ENCODE measurements at regions of chr4 and their contacts with region 1.

Region 1: GRCh38 chr4:174528226-174528625 is 5.9 kb upstream of the HPGD start:
- DNase-seq: no peak
- ATAC-seq: no peak
- H3K4me3 ChIP-seq: no peak overlapping the region
- H3K4me3 Mint-ChIP-seq: no peak overlapping the region
- H3K27ac ChIP-seq: no peak overlapping the region
- H3K27ac Mint-ChIP-seq: no peak overlapping the region
- H3K4me1 ChIP-seq: peaks cover under 1% of the 10 kb centered on the region
- H3K4me1 Mint-ChIP-seq: peaks cover 7% of the 10 kb centered on the region
- H3K27me3 ChIP-seq: peaks cover 4% of the 10 kb centered on the region in 2 experiments
- H3K27me3 Mint-ChIP-seq: peaks cover 33% of the 10 kb centered on the region
- CTCF ChIP-seq: no peak

Region 2: GRCh38 chr4:173782660-173783059 is 745.6 kb before region 1 on chr4:
- CTCF ChIA-PET with region 1: no interaction called
- POLR2A ChIA-PET with region 1: no interaction called
- intact Hi-C with region 1: no loop called
- DNase-seq: no peak
- ATAC-seq: no peak
- H3K4me3 ChIP-seq: no peak overlapping the region
- H3K4me3 Mint-ChIP-seq: no peak overlapping the region
- H3K27ac ChIP-seq: no peak overlapping the region
- H3K27ac Mint-ChIP-seq: no peak overlapping the region
- H3K4me1 ChIP-seq: no peaks in the 10 kb centered on the region
- H3K4me1 Mint-ChIP-seq: no peaks in the 10 kb centered on the region
- H3K27me3 ChIP-seq: no peaks in the 10 kb centered on the region
- H3K27me3 Mint-ChIP-seq: no peaks in the 10 kb centered on the region
- CTCF ChIP-seq: no peak

Region 3: DNA sequence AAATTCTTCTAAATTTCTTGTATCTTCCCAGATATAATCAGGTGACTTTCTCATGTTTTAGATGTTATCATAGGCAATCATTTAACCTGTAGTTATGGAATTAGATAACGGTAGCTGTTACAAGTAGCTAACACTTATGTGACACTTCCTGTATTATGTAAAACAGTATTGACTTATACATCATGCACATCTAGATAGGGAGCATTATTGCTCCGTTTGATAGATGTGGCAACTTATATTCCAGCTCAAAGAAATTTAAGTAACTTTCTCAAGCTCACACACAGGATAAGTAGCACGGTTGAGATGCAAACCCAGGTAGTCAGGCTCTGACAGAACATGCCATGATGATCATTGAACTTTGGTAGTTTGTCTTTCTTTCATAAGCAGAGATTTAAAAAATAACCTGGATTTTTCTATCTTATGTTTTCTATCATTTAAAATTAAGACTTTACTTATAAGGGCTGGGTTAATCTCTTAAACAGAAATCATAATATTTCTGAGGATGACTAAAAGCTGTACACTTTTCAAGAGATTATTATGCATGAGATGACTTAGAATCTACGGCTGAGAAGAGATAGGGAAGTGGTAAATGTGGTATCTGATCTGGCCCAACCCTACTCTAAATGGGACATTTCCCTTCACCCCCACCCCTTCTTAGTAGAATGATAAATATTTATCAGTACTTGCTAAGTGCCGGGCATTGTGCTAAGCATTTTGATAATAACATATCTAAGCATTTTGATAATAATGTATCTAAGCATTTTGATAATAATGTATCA is 63.2 kb after region 1 on chr4:
- CTCF ChIA-PET with region 1: no interaction called
- POLR2A ChIA-PET with region 1: no interaction called
- intact Hi-C with region 1: loop called in 1 of 2 experiments (anchors 5 kb)
- DNase-seq: peak in 3 of 14 experiments; percentile 39 to 52 (median 47)
- ATAC-seq: peak; percentile 69
- H3K4me3 ChIP-seq: peak overlapping the region; percentile 9
- H3K4me3 Mint-ChIP-seq: peak overlapping the region; percentile 22
- H3K27ac ChIP-seq: peak overlapping the region in 1 of 2 donors; percentile 28
- H3K27ac Mint-ChIP-seq: peak overlapping the region; percentile 63
- H3K4me1 ChIP-seq: no peaks in the 10 kb centered on the region
- H3K4me1 Mint-ChIP-seq: peaks cover 11% of the 10 kb centered on the region
- H3K27me3 ChIP-seq: no peaks in the 10 kb centered on the region
- H3K27me3 Mint-ChIP-seq: no peaks in the 10 kb centered on the region
- CTCF ChIP-seq: no peak